Thyroid gland (tissue), 4 donors: ENCODE measurements at regions of chr19 and their contacts with region 1.

Region 1: GRCh38 chr19:44764975-44765948 is 12.4 kb upstream of the CBLC start:
- DNase-seq: no peak
- H3K4me3 ChIP-seq: no peak overlapping the region
- H3K27ac ChIP-seq: no peak overlapping the region
- H3K4me1 ChIP-seq: no peaks in the 10 kb centered on the region
- H3K27me3 ChIP-seq: no peaks in the 10 kb centered on the region
- CTCF ChIP-seq: no peak
- POLR2A ChIP-seq: no peak

Region 2: DNA sequence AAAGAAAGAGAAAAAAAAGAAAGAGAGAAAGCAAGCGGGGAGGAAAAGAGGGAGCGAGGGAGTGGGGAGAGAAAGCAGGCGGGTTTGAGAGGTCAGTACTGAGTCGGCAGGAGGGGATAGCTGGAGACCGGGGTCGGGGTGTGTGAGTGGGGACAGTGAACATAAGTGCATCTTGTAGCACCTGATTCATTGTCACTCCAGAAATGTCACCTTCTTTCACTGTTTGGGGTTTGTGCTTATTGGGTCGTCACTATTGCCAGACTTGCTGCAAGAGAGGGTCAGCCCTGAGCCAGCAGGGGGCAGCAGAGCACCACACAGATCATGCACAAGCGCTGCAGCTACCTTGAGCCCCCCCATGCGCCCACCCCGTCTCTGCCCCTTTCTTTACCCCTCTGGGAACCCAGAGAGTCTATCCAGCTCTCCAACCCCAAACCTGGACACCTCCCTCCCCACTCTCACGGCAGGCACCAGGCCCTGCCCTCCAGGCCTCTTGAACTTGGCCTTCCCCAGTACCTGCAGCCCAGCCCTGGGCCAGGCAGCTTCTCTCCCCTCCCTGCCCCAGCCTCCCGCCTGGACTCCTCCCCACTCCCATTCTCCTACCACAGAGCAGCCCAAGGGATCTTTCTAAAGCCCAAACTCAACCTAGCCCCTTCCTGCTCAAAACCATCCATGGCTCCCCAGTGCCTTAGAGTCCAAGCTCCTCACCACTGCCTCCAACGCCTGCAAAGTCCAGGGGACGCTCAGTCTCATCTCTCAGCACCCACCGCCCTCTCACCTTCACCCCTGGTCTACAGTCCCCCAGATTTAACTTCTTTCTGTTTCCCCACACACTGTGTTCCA is 76.0 kb before region 1 on chr19:
- intact Hi-C with region 1: loop called (anchors 5 kb)
- DNase-seq: peak; percentile 82 to 85
- H3K4me3 ChIP-seq: no peak overlapping the region
- H3K27ac ChIP-seq: peak overlapping the region in 2 of 3 donors; percentile 47 to 64
- H3K4me1 ChIP-seq: peaks cover 22 to 61% of the 10 kb centered on the region in 2 donors
- H3K27me3 ChIP-seq: no peaks in the 10 kb centered on the region
- CTCF ChIP-seq: peak; percentile 73 to 97 (median 90)
- POLR2A ChIP-seq: no peak